ENCODE measurements at regions of chr19 and their contacts with region 1.

Region 1: DNA sequence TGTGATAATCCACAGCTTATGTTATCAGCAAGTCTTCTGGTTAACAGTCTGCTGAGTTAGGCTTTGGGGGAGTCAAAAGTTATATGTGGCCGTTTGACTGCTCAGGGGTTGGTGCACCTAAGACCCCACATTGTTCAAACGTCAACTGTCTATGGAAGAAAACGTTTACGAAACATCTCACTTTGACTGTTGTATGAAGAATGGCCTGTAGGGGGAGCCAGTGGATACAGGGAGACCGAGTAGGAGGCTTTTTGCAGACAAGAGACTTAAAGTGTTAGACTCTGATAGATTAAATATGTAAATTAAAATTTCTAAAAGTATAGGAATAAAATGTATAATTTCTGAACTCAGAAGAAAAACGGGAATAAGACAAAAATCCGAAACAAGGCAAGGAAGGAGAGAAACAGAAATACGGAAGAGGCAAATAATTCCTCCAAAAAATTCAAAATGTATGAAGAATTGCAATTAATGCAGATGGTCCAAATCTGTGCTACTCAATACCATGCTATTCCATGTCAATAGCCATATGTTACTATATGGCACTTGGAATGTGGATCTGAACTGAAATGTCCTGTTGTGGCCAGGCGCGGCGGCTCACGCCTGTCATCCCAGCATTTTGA is 37.8 kb downstream of the TNFSF14 start:
- DNase-seq: peak in 4 of 6 donors; percentile 33 to 71 (median 60)
- ATAC-seq: peak; percentile 73 to 98 (median 87)
- H3K4me3 ChIP-seq: no peak overlapping the region
- H3K27ac ChIP-seq: no peak overlapping the region
- H3K4me1 ChIP-seq: no peaks in the 10 kb centered on the region
- H3K27me3 ChIP-seq: peaks cover 0 to 5% (median 0%) of the 10 kb centered on the region in 4 donors
- CTCF ChIP-seq: peak; percentile 48 to 85 (median 84)

Region 2: DNA sequence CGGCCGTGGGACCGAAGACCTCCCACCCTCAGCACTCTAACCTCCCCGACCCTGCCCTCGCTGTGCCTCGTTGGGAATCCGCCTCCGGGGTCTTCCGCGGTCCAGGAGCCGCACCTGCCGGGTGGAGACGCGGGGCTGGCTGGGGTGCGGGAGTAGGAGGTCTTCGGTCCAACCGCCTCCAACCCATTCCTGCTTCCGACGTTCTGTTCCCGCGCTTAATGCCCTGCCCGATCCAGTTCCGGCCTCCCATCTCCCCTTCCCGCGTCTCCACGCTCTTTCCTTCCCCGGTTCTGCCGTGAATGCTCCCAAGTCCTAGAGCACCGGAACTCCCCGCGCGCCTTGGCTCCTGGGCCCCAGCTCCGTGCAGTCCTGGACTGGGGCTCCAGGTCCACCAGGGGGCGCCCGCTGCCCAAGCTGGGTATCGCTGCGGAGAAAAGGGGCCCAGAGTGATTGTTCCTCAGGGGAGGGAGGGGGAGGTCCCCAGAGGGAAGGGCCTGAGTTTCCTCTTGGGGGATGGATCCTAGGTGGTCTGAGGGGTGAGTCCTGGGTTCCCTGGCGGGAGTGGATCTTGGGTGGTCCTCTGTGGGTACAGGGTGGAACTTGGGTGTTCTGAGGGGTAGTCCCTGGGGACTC is 115.3 kb before region 1 on chr19:
- intact Hi-C with region 1: loop called in 1 of 3 experiments (anchors 5 kb)
- DNase-seq: peak; percentile 85 to 100 (median 92)
- ATAC-seq: peak; percentile 84 to 93 (median 88)
- H3K4me3 ChIP-seq: peak overlapping the region; percentile 57 to 77 (median 62)
- H3K27ac ChIP-seq: peak overlapping the region; percentile 59 to 89 (median 76)
- H3K4me1 ChIP-seq: peaks cover 0 to 9% (median 0%) of the 10 kb centered on the region in 3 donors
- H3K27me3 ChIP-seq: no peaks in the 10 kb centered on the region
- CTCF ChIP-seq: peak; percentile 86 to 97 (median 97)

Region 3: DNA sequence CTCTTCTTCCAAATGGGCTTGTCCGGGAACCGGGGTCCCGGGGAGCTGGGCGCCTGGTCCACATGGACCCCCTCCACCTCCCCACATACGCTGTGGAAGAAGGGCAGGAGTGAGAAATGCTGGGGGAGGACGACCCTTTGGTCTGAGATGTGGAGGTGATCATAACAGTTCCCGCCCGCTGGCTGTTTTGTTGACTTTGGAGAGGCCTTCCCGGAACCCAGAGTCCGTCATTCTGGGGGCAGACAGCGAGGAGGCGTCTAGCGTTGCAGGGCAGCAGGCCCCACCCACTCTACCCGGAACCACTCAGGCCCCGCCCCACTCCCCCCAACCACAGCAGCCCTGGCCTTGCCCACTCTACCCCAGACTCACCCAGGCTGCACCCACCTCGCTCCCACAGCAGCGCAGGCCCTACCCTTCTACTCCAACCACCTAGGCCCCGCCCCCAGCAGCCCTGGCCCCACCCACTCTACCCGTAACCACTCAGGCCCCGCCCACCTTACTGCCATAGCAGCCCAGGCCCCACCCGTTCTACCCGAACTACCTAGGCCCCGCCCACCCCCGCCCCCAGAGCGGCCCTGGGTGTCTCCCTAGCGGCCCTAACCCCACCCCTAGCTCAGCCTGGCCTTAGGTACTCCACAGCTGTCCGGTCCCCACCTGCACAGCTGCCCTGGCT is 98.2 kb after region 1 on chr19:
- intact Hi-C with region 1: no loop called
- DNase-seq: peak; percentile 67 to 93 (median 84)
- ATAC-seq: peak; percentile 55 to 83 (median 80)
- H3K4me3 ChIP-seq: peak overlapping the region in 1 of 4 donors; percentile 26
- H3K27ac ChIP-seq: peak overlapping the region in 3 of 4 donors; percentile 22 to 89 (median 75)
- H3K4me1 ChIP-seq: peaks cover 0 to 19% (median 9%) of the 10 kb centered on the region in 3 donors
- H3K27me3 ChIP-seq: no peaks in the 10 kb centered on the region
- CTCF ChIP-seq: no peak

Measured in pancreas (tissue), 10 donors.